ENCODE measurements at regions of chr5 and their contacts with region 1.

Region 1: DNA sequence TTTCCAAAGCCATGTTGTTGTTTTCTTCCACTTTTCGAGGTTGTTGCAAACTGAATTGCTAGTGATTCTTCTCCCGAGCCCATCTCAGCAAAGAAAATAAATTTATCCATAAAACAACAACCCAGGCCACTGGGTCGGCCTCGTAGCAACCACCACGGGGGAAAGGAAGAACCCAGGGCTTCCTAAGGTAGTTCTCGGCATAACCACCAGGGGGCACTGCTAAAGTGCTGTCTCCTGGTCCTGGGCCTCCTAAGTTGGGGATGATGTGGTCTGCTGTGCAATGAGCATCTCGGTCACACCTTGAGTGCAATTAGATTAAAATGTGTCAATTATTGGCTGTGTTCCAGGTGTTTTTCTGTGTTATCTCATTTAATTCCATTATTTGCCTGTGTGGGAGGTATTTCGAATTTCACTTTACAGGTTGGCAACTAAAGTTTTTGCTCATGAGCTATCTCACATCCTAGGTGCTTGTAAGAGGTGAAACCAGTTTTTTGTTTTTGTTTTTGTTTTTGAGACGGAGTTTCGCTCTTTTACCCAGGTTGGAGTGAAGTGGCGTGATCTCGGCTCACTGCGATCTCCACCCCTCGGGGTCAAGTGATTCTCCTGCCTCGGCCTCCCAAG is 102.8 kb upstream of the DAP start:
- DNase-seq: peak in 5 of 10 donors; percentile 28 to 62 (median 54)
- H3K4me3 ChIP-seq: no peak overlapping the region
- H3K27ac ChIP-seq: no peak overlapping the region
- H3K27me3 ChIP-seq: no peaks in the 10 kb centered on the region
- CTCF ChIP-seq: peak; percentile 36 to 85 (median 72)

Region 2: GRCh38 chr5:10987930-10988504 is 124.1 kb after region 1 on chr5:
- intact Hi-C with region 1: no loop called
- DNase-seq: peak in 9 of 10 donors; percentile 26 to 75 (median 63)
- H3K4me3 ChIP-seq: peak overlapping the region in 1 of 59 donors; percentile 19
- H3K27ac ChIP-seq: peak overlapping the region in 26 of 59 donors; percentile 2 to 74 (median 44)
- H3K27me3 ChIP-seq: no peaks in the 10 kb centered on the region
- CTCF ChIP-seq: peak; percentile 26 to 81 (median 64)

Region 3: DNA sequence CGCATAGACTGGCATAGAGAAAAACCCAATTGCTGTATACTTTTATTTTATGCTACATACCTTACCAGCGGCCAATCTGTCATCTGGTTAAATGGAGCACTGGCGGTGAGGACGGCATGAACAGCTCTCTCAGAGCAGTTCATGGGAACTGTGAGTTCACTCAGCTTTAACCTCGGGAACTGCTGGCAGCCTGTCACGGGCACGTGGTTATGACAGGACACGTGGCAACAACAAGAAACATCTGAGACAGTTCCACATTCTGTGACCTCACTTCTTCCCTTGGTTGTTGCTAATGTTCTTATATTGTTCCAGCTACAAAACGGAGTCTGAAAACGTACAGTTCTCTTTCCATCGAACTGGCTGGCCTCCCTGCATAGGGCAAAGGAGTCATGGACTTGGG is 143.4 kb after region 1 on chr5:
- intact Hi-C with region 1: no loop called
- DNase-seq: peak in 1 of 10 donors; percentile 49
- H3K4me3 ChIP-seq: no peak overlapping the region
- H3K27ac ChIP-seq: no peak overlapping the region
- H3K27me3 ChIP-seq: no peaks in the 10 kb centered on the region
- CTCF ChIP-seq: no peak

Region 4: GRCh38 chr5:11046160-11046559 is 182.3 kb after region 1 on chr5:
- intact Hi-C with region 1: loop called (anchors 5 to 10 kb)
- DNase-seq: peak in 3 of 10 donors; percentile 33 to 48 (median 48)
- H3K4me3 ChIP-seq: no peak overlapping the region
- H3K27ac ChIP-seq: peak overlapping the region in 2 of 59 donors; percentile 11 to 24
- H3K27me3 ChIP-seq: no peaks in the 10 kb centered on the region
- CTCF ChIP-seq: peak in 49 of 56 donors; percentile 10 to 67 (median 40)

Region 5: DNA sequence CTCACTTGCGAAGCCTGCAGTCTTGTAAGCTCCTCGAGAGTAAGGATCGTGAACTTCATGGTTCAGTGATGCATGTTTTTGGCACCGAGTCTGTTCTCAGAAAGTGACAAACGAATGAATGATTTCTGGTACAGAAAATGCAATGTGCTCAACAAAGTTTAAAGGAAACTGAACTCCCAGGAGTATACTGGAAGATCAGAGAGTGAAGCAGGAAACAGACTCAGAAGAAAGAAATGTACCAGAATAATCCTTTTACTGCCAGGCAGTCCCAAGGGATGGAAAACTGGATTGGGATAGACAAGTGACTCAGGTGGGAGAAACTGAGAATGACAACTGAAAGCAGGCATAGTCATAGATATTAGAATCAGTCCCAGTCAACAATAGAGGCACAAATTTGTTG is 619.8 kb after region 1 on chr5:
- intact Hi-C with region 1: loop called in 1 of 2 experiments (anchors 10 kb)
- DNase-seq: no peak
- H3K4me3 ChIP-seq: no peak overlapping the region
- H3K27ac ChIP-seq: no peak overlapping the region
- H3K27me3 ChIP-seq: no peaks in the 10 kb centered on the region
- CTCF ChIP-seq: no peak

Region 6: DNA sequence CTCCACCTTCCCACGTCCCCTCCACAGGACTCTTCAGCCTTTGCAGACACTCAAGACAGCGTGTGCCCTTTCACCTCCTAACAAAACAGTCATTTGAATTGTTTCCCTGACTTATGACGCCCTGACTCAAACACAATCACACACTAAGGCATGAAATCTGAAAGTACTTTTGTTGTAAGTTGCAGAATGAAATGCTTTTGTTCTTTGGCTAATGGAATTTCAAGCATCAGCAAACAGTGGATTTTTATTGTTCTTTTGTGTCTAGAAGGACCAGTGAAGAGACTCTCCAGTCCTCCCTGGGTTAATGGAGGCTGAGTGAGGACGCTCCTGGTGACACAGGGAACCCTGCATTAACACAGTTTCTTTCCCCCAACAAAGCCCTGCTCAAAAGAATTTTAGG is 660.3 kb after region 1 on chr5:
- intact Hi-C with region 1: no loop called
- DNase-seq: no peak
- H3K4me3 ChIP-seq: peak overlapping the region in 7 of 59 donors; percentile 3 to 36 (median 14)
- H3K27ac ChIP-seq: peak overlapping the region; percentile 75 to 99 (median 95)
- H3K27me3 ChIP-seq: no peaks in the 10 kb centered on the region
- CTCF ChIP-seq: peak in 2 of 56 donors; percentile 13 to 14

Measured in dorsolateral prefrontal cortex (tissue), 120 donors.